ENCODE measurements at regions of chr5 and their contacts with region 1.

Region 1: GRCh38 chr5:132500931-132501630 is 10.5 kb upstream of the IRF1 start:
- DNase-seq: peak; percentile 57 to 87 (median 73)
- H3K4me3 ChIP-seq: no peak overlapping the region
- H3K4me3 Mint-ChIP-seq: no peak overlapping the region
- H3K27ac ChIP-seq: no peak overlapping the region
- H3K27ac Mint-ChIP-seq: peak overlapping the region; percentile 41 to 100 (median 80)
- H3K4me1 ChIP-seq: peaks cover 34% of the 10 kb centered on the region
- H3K4me1 Mint-ChIP-seq: peaks cover 35 to 47% (median 38%) of the 10 kb centered on the region in 3 donors
- H3K27me3 ChIP-seq: peaks cover 3% of the 10 kb centered on the region
- H3K27me3 Mint-ChIP-seq: peaks cover 0 to 2% of the 10 kb centered on the region in 2 donors

Region 2: GRCh38 chr5:132272311-132273210 is 228.5 kb before region 1 on chr5:
- CTCF ChIA-PET with region 1: interaction called, 10 read pairs
- POLR2A ChIA-PET with region 1: no interaction called
- DNase-seq: peak; percentile 34 to 69 (median 46)
- H3K4me3 ChIP-seq: no peak overlapping the region
- H3K4me3 Mint-ChIP-seq: peak overlapping the region in 2 of 7 donors; percentile 50 to 74
- H3K27ac ChIP-seq: no peak overlapping the region
- H3K27ac Mint-ChIP-seq: no peak overlapping the region
- H3K4me1 ChIP-seq: no peaks in the 10 kb centered on the region
- H3K4me1 Mint-ChIP-seq: peaks cover 3 to 14% (median 9%) of the 10 kb centered on the region in 3 donors
- H3K27me3 ChIP-seq: no peaks in the 10 kb centered on the region
- H3K27me3 Mint-ChIP-seq: peaks cover 15 to 28% of the 10 kb centered on the region in 2 donors

Region 3: GRCh38 chr5:132419502-132420468 is 81.3 kb before region 1 on chr5:
- CTCF ChIA-PET with region 1: interaction called, 13 read pairs
- POLR2A ChIA-PET with region 1: interaction called, 10 read pairs
- DNase-seq: peak; percentile 42 to 77 (median 60)
- H3K4me3 ChIP-seq: no peak overlapping the region
- H3K4me3 Mint-ChIP-seq: peak overlapping the region; percentile 76 to 91 (median 78)
- H3K27ac ChIP-seq: peak overlapping the region; percentile 12
- H3K27ac Mint-ChIP-seq: peak overlapping the region; percentile 84 to 99 (median 98)
- H3K4me1 ChIP-seq: peaks cover 97% of the 10 kb centered on the region
- H3K4me1 Mint-ChIP-seq: peaks cover 90 to 98% (median 97%) of the 10 kb centered on the region in 3 donors
- H3K27me3 ChIP-seq: no peaks in the 10 kb centered on the region
- H3K27me3 Mint-ChIP-seq: no peaks in the 10 kb centered on the region

Region 4: DNA sequence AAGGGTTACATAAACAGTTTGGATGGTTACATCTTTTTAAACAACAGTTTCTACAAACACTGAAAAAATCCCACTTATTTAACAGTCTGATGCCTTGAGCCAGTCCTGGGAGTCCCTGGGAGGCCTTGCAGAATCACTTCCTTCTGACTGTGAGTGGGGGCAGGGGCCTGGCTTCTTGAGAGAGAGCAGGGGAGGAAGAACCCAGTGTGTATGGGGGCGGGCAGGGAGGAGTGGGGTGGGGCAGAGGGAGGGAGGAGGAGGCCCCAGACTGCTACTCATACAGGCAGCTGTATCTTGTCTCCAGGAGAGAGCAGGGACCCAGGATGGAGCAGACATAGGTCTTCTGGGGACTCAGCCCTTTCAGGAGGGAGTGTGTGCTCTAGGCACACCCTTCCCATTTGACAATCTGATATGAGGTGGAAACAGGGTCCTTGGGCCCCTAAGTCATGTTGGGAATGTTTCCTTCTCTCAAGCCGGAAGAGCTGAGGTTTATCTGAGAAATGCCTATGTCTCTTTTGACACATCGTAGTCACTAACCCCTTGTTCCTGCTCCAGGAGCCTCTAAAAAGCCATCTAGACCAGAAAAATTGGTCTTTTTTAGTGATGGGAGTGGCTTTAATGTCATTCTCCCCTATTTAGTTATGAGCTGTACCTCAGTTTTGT is 63.3 kb before region 1 on chr5:
- CTCF ChIA-PET with region 1: interaction called, 12 read pairs
- POLR2A ChIA-PET with region 1: interaction called, 7 read pairs
- DNase-seq: peak; percentile 35 to 82 (median 48)
- H3K4me3 ChIP-seq: peak overlapping the region; percentile 55
- H3K4me3 Mint-ChIP-seq: peak overlapping the region; percentile 62 to 86 (median 74)
- H3K27ac ChIP-seq: peak overlapping the region; percentile 45
- H3K27ac Mint-ChIP-seq: peak overlapping the region; percentile 89 to 98 (median 94)
- H3K4me1 ChIP-seq: peaks cover 95% of the 10 kb centered on the region
- H3K4me1 Mint-ChIP-seq: peaks cover 88 to 99% (median 95%) of the 10 kb centered on the region in 3 donors
- H3K27me3 ChIP-seq: no peaks in the 10 kb centered on the region
- H3K27me3 Mint-ChIP-seq: no peaks in the 10 kb centered on the region

Region 5: GRCh38 chr5:132466433-132467286 is 34.4 kb before region 1 on chr5:
- CTCF ChIA-PET with region 1: interaction called, 222 read pairs
- POLR2A ChIA-PET with region 1: interaction called, 11 read pairs
- DNase-seq: peak; percentile 63 to 88 (median 78)
- H3K4me3 ChIP-seq: peak overlapping the region; percentile 57
- H3K4me3 Mint-ChIP-seq: peak overlapping the region; percentile 72 to 92 (median 82)
- H3K27ac ChIP-seq: peak overlapping the region; percentile 64
- H3K27ac Mint-ChIP-seq: peak overlapping the region; percentile 87 to 100 (median 98)
- H3K4me1 ChIP-seq: peaks cover 95% of the 10 kb centered on the region
- H3K4me1 Mint-ChIP-seq: peaks cover 98 to 100% (median 99%) of the 10 kb centered on the region in 3 donors
- H3K27me3 ChIP-seq: no peaks in the 10 kb centered on the region
- H3K27me3 Mint-ChIP-seq: no peaks in the 10 kb centered on the region

Region 6: GRCh38 chr5:132490486-132491367 is 10.4 kb before region 1 on chr5 and contains the start of gene IRF1:
- CTCF ChIA-PET with region 1: interaction called, 59 read pairs
- POLR2A ChIA-PET with region 1: interaction called, 26 read pairs
- DNase-seq: peak; percentile 95 to 99 (median 98)
- H3K4me3 ChIP-seq: peak within 1 kb of the TSS; percentile 88
- H3K4me3 Mint-ChIP-seq: peak within 1 kb of the TSS; percentile 88 to 99 (median 96)
- H3K27ac ChIP-seq: peak within 1 kb of the TSS; percentile 96
- H3K27ac Mint-ChIP-seq: peak within 1 kb of the TSS; percentile 97 to 100 (median 98)
- H3K4me1 ChIP-seq: peaks cover 80% of the 10 kb centered on the region
- H3K4me1 Mint-ChIP-seq: peaks cover 69 to 80% (median 77%) of the 10 kb centered on the region in 3 donors
- H3K27me3 ChIP-seq: no peaks in the 10 kb centered on the region
- H3K27me3 Mint-ChIP-seq: peaks cover 0 to 13% of the 10 kb centered on the region in 2 donors
- total RNA-seq, gene IRF1: 115 to 121 TPM

Region 7: DNA sequence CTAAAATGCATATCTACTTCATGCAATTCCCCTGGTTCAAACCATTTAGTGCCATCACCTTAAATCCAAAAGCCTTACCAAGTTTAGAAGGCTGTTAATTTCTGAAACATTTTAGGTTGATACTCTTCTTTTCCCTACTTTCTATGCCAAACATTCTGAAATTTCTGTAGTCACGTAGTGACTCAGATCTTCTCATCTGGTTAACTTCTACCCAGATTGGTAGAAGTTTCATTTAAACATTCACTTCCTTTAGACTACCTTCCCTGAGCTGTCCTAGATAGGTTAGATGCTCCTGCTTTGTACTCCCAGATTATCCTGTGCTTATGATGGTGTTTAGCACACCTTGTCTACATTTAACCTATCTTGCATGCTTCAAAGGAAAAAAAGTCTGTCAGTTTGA is 65.6 kb after region 1 on chr5:
- CTCF ChIA-PET with region 1: no interaction called
- POLR2A ChIA-PET with region 1: no interaction called
- DNase-seq: no peak
- H3K4me3 ChIP-seq: no peak overlapping the region
- H3K4me3 Mint-ChIP-seq: no peak overlapping the region
- H3K27ac ChIP-seq: no peak overlapping the region
- H3K27ac Mint-ChIP-seq: peak overlapping the region in 1 of 8 donors; percentile 8
- H3K4me1 ChIP-seq: peaks cover 5% of the 10 kb centered on the region
- H3K4me1 Mint-ChIP-seq: peaks cover 6 to 39% (median 34%) of the 10 kb centered on the region in 3 donors
- H3K27me3 ChIP-seq: no peaks in the 10 kb centered on the region
- H3K27me3 Mint-ChIP-seq: no peaks in the 10 kb centered on the region